Left ventricle myocardium inferior (tissue), 1 donor: ENCODE measurements at regions of chr1 and their contacts with region 1.

Region 1: GRCh38 chr1:109535971-109536491 is 3.6 kb upstream of the GPR61 start:
- DNase-seq: peak; percentile 53
- H3K4me3 ChIP-seq: peak overlapping the region; percentile 36
- H3K27ac ChIP-seq: peak overlapping the region; percentile 87
- H3K4me1 ChIP-seq: peaks cover 45% of the 10 kb centered on the region
- H3K27me3 ChIP-seq: no peaks in the 10 kb centered on the region
- CTCF ChIP-seq: no peak

Region 2: GRCh38 chr1:109493805-109494539 is 42.1 kb before region 1 on chr1 and contains the start of gene CYB561D1:
- intact Hi-C with region 1: loop called (anchors 2 kb)
- DNase-seq: peak; percentile 88
- H3K4me3 ChIP-seq: peak within 1 kb of the TSS; percentile 94
- H3K27ac ChIP-seq: peak within 1 kb of the TSS; percentile 90
- H3K4me1 ChIP-seq: peaks cover 44% of the 10 kb centered on the region
- H3K27me3 ChIP-seq: no peaks in the 10 kb centered on the region
- CTCF ChIP-seq: peak; percentile 98
- total RNA-seq, gene CYB561D1: 4.6 TPM